Sigmoid colon (tissue), 7 donors: ENCODE measurements at regions of chr9 and their contacts with region 1.

Region 1: DNA sequence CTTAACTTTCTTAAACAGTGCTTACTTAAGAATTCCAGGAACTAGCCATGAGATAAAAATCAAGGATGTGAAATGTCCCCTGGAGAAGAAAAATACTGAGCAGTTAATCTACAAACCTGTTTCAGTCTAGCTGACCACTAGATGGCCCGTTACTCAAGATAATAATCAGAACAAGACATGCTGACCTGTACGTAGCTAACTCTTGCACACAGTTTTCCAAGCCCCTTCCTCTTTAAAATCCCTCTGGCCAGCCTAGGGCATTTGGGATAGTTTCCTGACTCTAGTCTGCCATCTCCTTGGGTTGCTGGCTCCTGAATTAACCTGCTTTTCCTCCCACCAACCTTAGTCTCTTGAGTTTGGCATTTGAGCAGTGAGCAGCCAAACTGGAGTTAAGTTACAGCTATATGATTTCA is 59.2 kb upstream of the TRAF1 start:
- DNase-seq: no peak
- H3K4me3 ChIP-seq: no peak overlapping the region
- H3K27ac ChIP-seq: no peak overlapping the region
- H3K4me1 ChIP-seq: no peaks in the 10 kb centered on the region
- H3K27me3 ChIP-seq: no peaks in the 10 kb centered on the region
- CTCF ChIP-seq: peak in 3 of 4 experiments; percentile 21 to 41 (median 28)
- EP300 ChIP-seq: no peak
- POLR2A ChIP-seq: no peak

Region 2: DNA sequence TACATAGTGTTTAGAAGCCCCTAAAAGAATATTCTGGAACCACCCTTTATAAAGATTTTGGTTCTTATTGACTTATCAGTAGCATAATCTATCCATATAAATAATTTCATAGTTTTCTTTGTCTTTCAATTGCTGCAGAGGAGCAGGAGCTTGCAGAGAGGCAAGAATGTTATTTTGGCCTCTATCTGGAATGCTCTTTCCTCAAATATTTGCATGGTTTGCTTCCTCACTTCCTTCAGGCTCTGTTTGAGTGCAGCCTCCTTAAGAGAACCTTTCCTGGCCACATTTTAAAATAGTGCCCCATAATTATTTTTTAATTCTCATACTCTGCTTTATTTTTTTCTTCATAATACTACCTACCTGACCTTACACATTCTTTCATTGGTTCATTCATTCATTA is 62.8 kb after region 1 on chr9:
- intact Hi-C with region 1: no loop called
- DNase-seq: no peak
- H3K4me3 ChIP-seq: no peak overlapping the region
- H3K27ac ChIP-seq: no peak overlapping the region
- H3K4me1 ChIP-seq: no peaks in the 10 kb centered on the region
- H3K27me3 ChIP-seq: no peaks in the 10 kb centered on the region
- CTCF ChIP-seq: no peak
- EP300 ChIP-seq: no peak
- POLR2A ChIP-seq: no peak

Region 3: DNA sequence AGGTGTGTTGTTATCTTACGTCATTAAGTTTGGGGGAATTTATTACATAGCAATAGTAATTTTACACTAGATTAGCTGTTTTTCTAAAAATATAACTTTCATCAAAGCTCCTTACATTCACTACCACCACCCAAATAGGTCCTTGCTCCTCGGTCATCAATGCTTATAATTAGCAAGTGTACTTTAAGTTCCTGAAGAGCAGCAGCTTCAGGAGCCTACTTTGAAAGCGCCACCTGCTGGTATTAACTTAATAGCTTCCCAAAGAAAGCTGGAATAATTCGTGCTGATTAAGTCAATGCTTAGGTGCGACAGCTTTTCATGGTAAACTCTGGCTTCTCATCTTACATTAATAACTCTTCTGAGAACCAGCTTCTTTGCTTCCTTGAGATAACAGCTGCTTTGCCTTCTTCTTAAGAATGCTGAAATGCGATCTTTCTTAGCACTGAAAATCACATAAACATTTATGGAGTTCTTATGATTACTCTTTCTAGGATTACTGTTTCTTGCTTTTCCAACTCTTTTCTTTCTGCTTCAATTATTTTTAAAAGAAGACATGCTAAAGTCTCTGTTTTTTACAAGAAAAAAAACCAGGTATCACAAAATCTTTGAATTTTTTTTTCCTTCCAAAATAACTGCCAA is 74.3 kb after region 1 on chr9:
- intact Hi-C with region 1: loop called (anchors 10 kb)
- DNase-seq: no peak
- H3K4me3 ChIP-seq: no peak overlapping the region
- H3K27ac ChIP-seq: no peak overlapping the region
- H3K4me1 ChIP-seq: no peaks in the 10 kb centered on the region
- H3K27me3 ChIP-seq: no peaks in the 10 kb centered on the region
- CTCF ChIP-seq: peak; percentile 39 to 69 (median 53)
- EP300 ChIP-seq: no peak
- POLR2A ChIP-seq: no peak

Region 4: GRCh38 chr9:121399883-121400607 is 414.2 kb after region 1 on chr9:
- intact Hi-C with region 1: loop called (anchors 5 kb)
- DNase-seq: no peak
- H3K4me3 ChIP-seq: no peak overlapping the region
- H3K27ac ChIP-seq: no peak overlapping the region
- H3K4me1 ChIP-seq: peaks cover 0 to 4% (median 0%) of the 10 kb centered on the region in 4 donors
- H3K27me3 ChIP-seq: no peaks in the 10 kb centered on the region
- CTCF ChIP-seq: peak; percentile 62 to 78 (median 70)
- EP300 ChIP-seq: no peak
- POLR2A ChIP-seq: no peak

Region 5: GRCh38 chr9:121581786-121582600 is 596.2 kb after region 1 on chr9:
- intact Hi-C with region 1: no loop called
- DNase-seq: no peak
- H3K4me3 ChIP-seq: no peak overlapping the region
- H3K27ac ChIP-seq: peak overlapping the region in 3 of 4 donors; percentile 7 to 58 (median 52)
- H3K4me1 ChIP-seq: peaks cover 0 to 54% (median 37%) of the 10 kb centered on the region in 4 donors
- H3K27me3 ChIP-seq: no peaks in the 10 kb centered on the region
- CTCF ChIP-seq: no peak
- EP300 ChIP-seq: no peak
- POLR2A ChIP-seq: no peak